ENCODE measurements at regions of chr11 and their contacts with region 1.

Region 1: DNA sequence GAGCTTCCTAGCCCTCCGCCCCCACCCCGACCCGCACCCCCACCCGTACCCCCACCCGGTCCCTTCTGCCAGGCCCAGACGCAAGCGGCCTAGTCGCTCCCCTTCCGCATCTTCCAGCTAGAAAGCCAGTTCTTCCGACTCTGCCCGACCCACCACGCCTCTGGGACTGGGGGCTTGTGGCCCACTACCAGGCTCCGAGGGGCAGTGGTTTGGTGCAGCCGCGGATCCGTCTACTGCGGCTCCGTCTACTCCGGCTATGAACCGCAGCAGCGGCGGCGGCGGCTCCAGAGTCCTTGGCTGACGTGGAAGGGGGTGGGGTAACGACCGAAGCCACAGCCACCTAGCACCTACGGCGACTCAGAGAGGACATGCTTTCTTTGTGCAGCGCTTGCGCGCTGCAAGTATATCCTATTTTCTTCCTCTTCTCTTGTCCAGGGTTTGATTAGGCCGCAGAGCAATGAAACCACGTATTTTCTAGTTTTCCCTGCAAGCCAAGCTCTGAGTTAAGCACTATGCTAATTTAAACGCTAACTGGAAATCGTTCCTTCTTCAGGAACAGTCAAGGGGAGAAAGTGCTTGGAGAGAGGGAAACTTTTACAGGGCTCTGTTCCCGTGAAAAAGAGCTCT is at the start of gene COPB1:
- DNase-seq: peak; percentile 94
- H3K4me3 ChIP-seq: peak within 1 kb of the TSS; percentile 62 to 95 (median 95)
- H3K27ac ChIP-seq: peak within 1 kb of the TSS; percentile 82
- H3K4me1 ChIP-seq: peaks cover 20% of the 10 kb centered on the region
- H3K27me3 ChIP-seq: no peaks in the 10 kb centered on the region
- CTCF ChIP-seq: no peak
- POLR2A ChIP-seq: peak; percentile 97
- total RNA-seq, gene COPB1: 145 and 146 TPM in 2 replicates

Region 2: DNA sequence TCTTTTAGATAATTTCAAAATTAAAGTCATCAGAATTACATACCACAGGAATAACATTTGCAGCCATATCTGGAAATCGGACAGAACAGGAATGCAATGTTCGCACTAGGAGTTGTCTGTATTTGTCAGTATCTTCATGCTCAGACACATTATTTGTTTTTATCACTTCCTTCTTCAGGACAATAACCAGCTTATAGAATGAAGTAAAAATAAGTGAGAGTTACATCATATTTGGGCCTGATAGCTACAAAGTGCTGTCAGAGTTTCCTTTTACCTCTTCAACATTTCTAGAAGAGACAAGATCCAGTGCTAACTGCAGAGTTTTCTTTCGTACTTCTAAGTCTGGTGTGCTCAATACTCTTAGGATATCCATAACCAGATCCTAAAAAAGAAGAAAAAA is 19.0 kb before region 1 on chr11:
- CTCF ChIA-PET with region 1: interaction called, 3 read pairs
- POLR2A ChIA-PET with region 1: no interaction called
- dilution Hi-C with region 1: no loop called
- intact Hi-C with region 1: loop called (anchors 2 kb)
- DNase-seq: no peak
- H3K4me3 ChIP-seq: no peak overlapping the region
- H3K27ac ChIP-seq: no peak overlapping the region
- H3K4me1 ChIP-seq: no peaks in the 10 kb centered on the region
- H3K27me3 ChIP-seq: no peaks in the 10 kb centered on the region
- CTCF ChIP-seq: no peak
- POLR2A ChIP-seq: no peak

Region 3: GRCh38 chr11:14519917-14520746 is 20.5 kb after region 1 on chr11 and contains the start of gene PSMA1:
- CTCF ChIA-PET with region 1: no interaction called
- POLR2A ChIA-PET with region 1: no interaction called
- dilution Hi-C with region 1: no loop called
- intact Hi-C with region 1: loop called (anchors 1 kb)
- DNase-seq: peak; percentile 98
- H3K4me3 ChIP-seq: peak within 1 kb of the TSS; percentile 86 to 97 (median 88)
- H3K27ac ChIP-seq: peak within 1 kb of the TSS; percentile 97
- H3K4me1 ChIP-seq: peaks cover 15% of the 10 kb centered on the region
- H3K27me3 ChIP-seq: no peaks in the 10 kb centered on the region
- CTCF ChIP-seq: no peak
- POLR2A ChIP-seq: peak; percentile 88
- total RNA-seq, gene PSMA1: 194 and 203 TPM in 2 replicates

Region 4: DNA sequence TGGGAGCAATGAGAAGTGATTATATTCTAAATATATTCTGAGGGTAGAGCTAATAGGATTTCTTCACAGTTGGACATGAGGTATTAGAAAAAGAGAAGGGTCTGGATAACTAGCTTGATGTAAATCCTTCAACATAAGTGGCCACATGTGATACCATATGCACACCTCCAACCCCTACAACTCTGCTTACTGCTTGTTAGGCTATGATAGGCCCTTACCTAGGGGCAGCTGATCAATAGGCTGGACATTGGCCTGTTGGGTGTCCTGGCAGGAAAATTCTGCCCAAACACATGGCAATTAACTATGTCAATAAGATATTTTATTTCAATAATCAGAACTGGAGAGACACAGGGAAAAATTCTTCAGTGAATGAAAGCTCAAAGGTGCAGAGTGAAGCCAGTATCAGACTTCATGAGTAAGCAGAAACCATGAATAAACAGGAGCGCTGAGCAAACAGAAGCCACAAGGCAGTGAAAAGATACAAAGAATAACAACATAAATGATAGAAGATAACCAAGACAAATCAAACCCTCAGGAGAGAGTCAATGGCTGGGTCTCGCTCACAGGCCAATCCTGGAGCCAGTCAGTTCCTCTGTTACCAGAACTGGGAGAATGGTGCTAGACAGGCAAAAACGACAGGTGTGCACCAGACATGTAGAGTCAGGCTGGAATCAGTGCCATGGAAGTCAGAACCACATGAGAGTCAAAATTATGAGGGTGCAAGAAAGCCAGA is 66.8 kb after region 1 on chr11:
- CTCF ChIA-PET with region 1: no interaction called
- POLR2A ChIA-PET with region 1: no interaction called
- dilution Hi-C with region 1: no loop called
- intact Hi-C with region 1: no loop called
- DNase-seq: no peak
- H3K4me3 ChIP-seq: no peak overlapping the region
- H3K27ac ChIP-seq: no peak overlapping the region
- H3K4me1 ChIP-seq: no peaks in the 10 kb centered on the region
- H3K27me3 ChIP-seq: peaks cover 0 to 3% of the 10 kb centered on the region in 2 experiments
- CTCF ChIP-seq: no peak
- POLR2A ChIP-seq: no peak